ENCODE measurements at regions of chr17 and their contacts with region 1.

Region 1: DNA sequence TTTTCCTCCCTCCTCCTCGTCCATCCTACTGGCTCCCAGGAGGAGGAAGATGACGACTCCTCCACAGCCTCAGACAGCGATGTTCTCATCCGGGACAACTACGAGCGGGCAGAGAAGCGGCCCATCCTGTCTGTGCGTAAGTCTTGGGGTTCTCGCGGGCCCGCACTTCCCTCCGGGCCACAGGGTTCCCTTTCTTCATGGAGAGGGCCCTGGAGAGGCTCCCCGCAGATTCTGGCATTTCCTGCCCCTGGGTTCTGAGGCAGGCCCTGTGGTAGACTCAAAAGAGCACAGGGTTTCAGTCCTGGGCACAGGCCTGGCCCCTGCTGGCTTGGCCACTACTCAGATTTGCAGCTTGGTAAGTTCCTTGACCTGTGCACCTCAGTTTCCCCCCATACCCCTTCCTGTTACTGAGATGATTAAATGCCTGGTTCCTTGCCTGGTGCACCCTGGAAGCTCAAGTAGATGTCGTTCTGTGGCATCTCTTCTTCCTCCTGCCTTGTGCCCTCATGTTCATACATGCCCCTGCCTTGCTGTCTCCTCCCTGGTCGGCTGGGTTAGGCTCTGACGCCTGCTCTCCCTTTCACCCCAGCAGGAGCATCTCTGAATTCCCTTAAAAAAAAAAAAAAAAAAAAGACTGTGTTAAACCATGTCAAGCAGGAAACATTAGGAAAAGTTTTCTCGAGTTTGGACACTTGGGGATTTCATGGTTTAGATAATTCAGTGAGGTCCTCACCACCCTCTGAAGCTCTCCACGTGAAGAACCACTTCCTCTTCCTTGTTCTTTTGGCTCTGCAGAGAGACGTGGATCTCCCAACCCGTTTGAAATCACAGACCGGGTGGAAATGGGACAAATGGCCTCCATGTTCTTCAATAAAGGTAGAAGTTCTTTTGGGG is 14.3 kb upstream of the NAT9 start:
- DNase-seq: no peak
- H3K4me3 ChIP-seq: no peak overlapping the region
- H3K4me3 Mint-ChIP-seq: peak overlapping the region in 6 of 8 donors; percentile 51 to 70 (median 58)
- H3K27ac ChIP-seq: no peak overlapping the region
- H3K27ac Mint-ChIP-seq: peak overlapping the region in 4 of 7 donors; percentile 42 to 82 (median 68)
- H3K4me1 ChIP-seq: peaks cover 19% of the 10 kb centered on the region
- H3K4me1 Mint-ChIP-seq: peaks cover 17 to 41% (median 29%) of the 10 kb centered on the region in 4 donors
- H3K27me3 ChIP-seq: no peaks in the 10 kb centered on the region
- H3K27me3 Mint-ChIP-seq: no peaks in the 10 kb centered on the region

Region 2: GRCh38 chr17:74042744-74043486 is 747.5 kb before region 1 on chr17:
- CTCF ChIA-PET with region 1: no interaction called
- POLR2A ChIA-PET with region 1: no interaction called
- intact Hi-C with region 1: no loop called
- DNase-seq: no peak
- H3K4me3 ChIP-seq: no peak overlapping the region
- H3K4me3 Mint-ChIP-seq: no peak overlapping the region
- H3K27ac ChIP-seq: no peak overlapping the region
- H3K27ac Mint-ChIP-seq: no peak overlapping the region
- H3K4me1 ChIP-seq: no peaks in the 10 kb centered on the region
- H3K4me1 Mint-ChIP-seq: no peaks in the 10 kb centered on the region
- H3K27me3 ChIP-seq: no peaks in the 10 kb centered on the region
- H3K27me3 Mint-ChIP-seq: peaks cover 1 to 6% of the 10 kb centered on the region in 2 donors

Region 3: GRCh38 chr17:74742153-74742515 is 48.3 kb before region 1 on chr17:
- CTCF ChIA-PET with region 1: interaction called, 72 read pairs
- POLR2A ChIA-PET with region 1: interaction called, 12 read pairs
- intact Hi-C with region 1: loop called (anchors 1 kb)
- DNase-seq: peak in 4 of 5 donors; percentile 46 to 58 (median 57)
- H3K4me3 ChIP-seq: peak overlapping the region; percentile 20 to 30
- H3K4me3 Mint-ChIP-seq: peak overlapping the region; percentile 72 to 91 (median 79)
- H3K27ac ChIP-seq: peak overlapping the region; percentile 49
- H3K27ac Mint-ChIP-seq: peak overlapping the region in 6 of 7 donors; percentile 88 to 96 (median 90)
- H3K4me1 ChIP-seq: peaks cover 95% of the 10 kb centered on the region
- H3K4me1 Mint-ChIP-seq: peaks cover 54 to 95% (median 75%) of the 10 kb centered on the region in 4 donors
- H3K27me3 ChIP-seq: no peaks in the 10 kb centered on the region
- H3K27me3 Mint-ChIP-seq: no peaks in the 10 kb centered on the region

Region 4: DNA sequence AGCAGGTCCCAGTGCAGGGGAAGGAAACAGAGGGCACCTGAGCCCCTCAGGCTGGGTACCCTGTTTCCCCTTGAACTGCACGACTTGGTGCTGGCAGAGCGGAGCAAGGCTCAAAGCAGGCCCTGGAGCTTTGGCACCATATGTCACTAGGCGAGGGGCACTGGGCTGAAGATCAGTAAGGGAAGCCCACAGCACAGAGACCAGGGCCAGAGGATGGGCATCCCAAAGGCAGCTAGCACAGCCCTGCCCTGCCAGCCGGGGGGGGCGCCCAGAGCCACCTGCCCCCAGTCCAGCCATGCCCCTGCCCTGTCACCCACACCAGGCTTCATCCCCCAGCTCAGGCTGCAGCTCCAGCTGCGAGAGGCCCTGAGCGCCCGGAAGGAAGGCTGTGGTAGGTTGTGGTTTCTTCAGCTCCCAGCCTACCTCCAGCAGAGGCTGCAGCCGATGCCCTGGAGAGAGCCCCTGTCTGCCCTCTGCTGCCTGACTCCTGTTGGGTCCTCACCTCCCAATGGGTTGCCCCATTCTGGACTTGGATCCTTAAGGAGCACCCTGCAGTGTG is 31.1 kb before region 1 on chr17:
- CTCF ChIA-PET with region 1: interaction called, 25 read pairs
- POLR2A ChIA-PET with region 1: interaction called, 5 read pairs
- intact Hi-C with region 1: no loop called
- DNase-seq: peak; percentile 63 to 75 (median 64)
- H3K4me3 ChIP-seq: peak overlapping the region; percentile 34 to 54
- H3K4me3 Mint-ChIP-seq: peak overlapping the region; percentile 74 to 90 (median 84)
- H3K27ac ChIP-seq: peak overlapping the region; percentile 65
- H3K27ac Mint-ChIP-seq: peak overlapping the region; percentile 84 to 93 (median 90)
- H3K4me1 ChIP-seq: peaks cover 94% of the 10 kb centered on the region
- H3K4me1 Mint-ChIP-seq: peaks cover 42 to 84% (median 65%) of the 10 kb centered on the region in 4 donors
- H3K27me3 ChIP-seq: no peaks in the 10 kb centered on the region
- H3K27me3 Mint-ChIP-seq: no peaks in the 10 kb centered on the region

Region 5: GRCh38 chr17:74776044-74776977 is 14.1 kb before region 1 on chr17 and contains the start of gene NAT9:
- CTCF ChIA-PET with region 1: interaction called, 109 read pairs
- POLR2A ChIA-PET with region 1: interaction called, 12 read pairs
- intact Hi-C with region 1: loop called (anchors 1 kb)
- DNase-seq: peak; percentile 95 to 99 (median 97)
- H3K4me3 ChIP-seq: peak within 1 kb of the TSS; percentile 64 to 89
- H3K4me3 Mint-ChIP-seq: peak within 1 kb of the TSS; percentile 95 to 100 (median 99)
- H3K27ac ChIP-seq: peak within 1 kb of the TSS; percentile 77
- H3K27ac Mint-ChIP-seq: peak within 1 kb of the TSS; percentile 93 to 99 (median 97)
- H3K4me1 ChIP-seq: peaks cover 65% of the 10 kb centered on the region
- H3K4me1 Mint-ChIP-seq: peaks cover 45 to 83% (median 61%) of the 10 kb centered on the region in 4 donors
- H3K27me3 ChIP-seq: no peaks in the 10 kb centered on the region
- H3K27me3 Mint-ChIP-seq: no peaks in the 10 kb centered on the region
- total RNA-seq, gene NAT9: 60.0 to 70.3 TPM

Region 6: DNA sequence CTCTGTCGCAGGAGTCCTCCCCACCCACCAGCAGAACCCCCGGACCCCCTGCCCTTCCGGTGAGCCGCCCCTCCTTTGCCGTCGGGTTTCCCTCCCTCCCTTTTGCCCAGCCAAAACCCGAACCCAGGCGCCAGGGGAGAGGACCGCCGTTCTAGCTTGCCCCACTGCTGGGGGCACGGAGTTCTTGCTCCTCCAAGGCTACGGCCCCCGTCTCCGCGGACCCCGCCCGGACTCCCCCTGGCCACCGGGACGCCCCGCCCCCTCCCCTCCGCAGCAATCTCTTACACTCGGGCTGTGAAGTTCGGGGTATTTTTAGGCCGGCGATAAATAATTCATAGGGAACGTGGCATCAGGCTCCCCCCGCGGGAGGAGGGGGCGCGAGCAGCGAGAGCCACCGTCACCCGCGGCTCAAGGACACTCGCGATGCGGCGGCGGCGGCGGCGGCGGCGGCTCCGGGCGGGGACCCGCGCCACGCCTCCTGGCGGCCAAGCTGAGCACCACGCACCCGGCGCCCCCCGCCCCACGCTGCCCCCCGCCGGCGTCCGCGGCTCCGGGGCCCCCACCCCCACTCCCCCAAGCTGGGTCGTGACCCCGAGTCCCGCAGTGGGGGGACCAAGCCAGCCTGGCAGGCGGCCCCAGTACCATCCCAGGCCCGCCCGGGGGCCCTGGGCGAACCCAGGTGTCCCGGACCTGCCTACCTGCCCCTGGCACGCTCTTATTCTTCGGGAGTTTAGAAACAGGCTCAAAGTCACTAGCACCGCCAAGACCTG is 69.2 kb after region 1 on chr17 and contains the start of gene GRIN2C:
- CTCF ChIA-PET with region 1: interaction called, 127 read pairs
- POLR2A ChIA-PET with region 1: interaction called, 3 read pairs
- intact Hi-C with region 1: no loop called
- DNase-seq: peak in 4 of 5 donors; percentile 27 to 44 (median 42)
- H3K4me3 ChIP-seq: no peak within 1 kb of the TSS
- H3K4me3 Mint-ChIP-seq: peak within 1 kb of the TSS; percentile 55 to 78 (median 74)
- H3K27ac ChIP-seq: no peak within 1 kb of the TSS
- H3K27ac Mint-ChIP-seq: peak within 1 kb of the TSS in 3 of 7 donors; percentile 13 to 45 (median 43)
- H3K4me1 ChIP-seq: peaks cover 27% of the 10 kb centered on the region
- H3K4me1 Mint-ChIP-seq: peaks cover 6 to 22% (median 11%) of the 10 kb centered on the region in 4 donors
- H3K27me3 ChIP-seq: peaks cover 37% of the 10 kb centered on the region
- H3K27me3 Mint-ChIP-seq: peaks cover 25 to 43% of the 10 kb centered on the region in 2 donors
- total RNA-seq, gene GRIN2C: 0.09 TPM in 1 of 2 experiments, not detected in the other

Region 7: GRCh38 chr17:74873038-74873873 is 82.8 kb after region 1 on chr17:
- CTCF ChIA-PET with region 1: interaction called, 10 read pairs
- POLR2A ChIA-PET with region 1: no interaction called
- intact Hi-C with region 1: no loop called
- DNase-seq: peak; percentile 97 to 100 (median 99)
- H3K4me3 ChIP-seq: peak overlapping the region; percentile 79 to 84
- H3K4me3 Mint-ChIP-seq: peak overlapping the region; percentile 87 to 98 (median 94)
- H3K27ac ChIP-seq: peak overlapping the region; percentile 90
- H3K27ac Mint-ChIP-seq: peak overlapping the region; percentile 90 to 98 (median 98)
- H3K4me1 ChIP-seq: peaks cover 22% of the 10 kb centered on the region
- H3K4me1 Mint-ChIP-seq: peaks cover 10 to 27% (median 17%) of the 10 kb centered on the region in 4 donors
- H3K27me3 ChIP-seq: no peaks in the 10 kb centered on the region
- H3K27me3 Mint-ChIP-seq: no peaks in the 10 kb centered on the region

Measured in CD4-positive, alpha-beta memory T cell (primary cell).